ENCODE measurements at regions of chr20 and their contacts with region 1.

Region 1: DNA sequence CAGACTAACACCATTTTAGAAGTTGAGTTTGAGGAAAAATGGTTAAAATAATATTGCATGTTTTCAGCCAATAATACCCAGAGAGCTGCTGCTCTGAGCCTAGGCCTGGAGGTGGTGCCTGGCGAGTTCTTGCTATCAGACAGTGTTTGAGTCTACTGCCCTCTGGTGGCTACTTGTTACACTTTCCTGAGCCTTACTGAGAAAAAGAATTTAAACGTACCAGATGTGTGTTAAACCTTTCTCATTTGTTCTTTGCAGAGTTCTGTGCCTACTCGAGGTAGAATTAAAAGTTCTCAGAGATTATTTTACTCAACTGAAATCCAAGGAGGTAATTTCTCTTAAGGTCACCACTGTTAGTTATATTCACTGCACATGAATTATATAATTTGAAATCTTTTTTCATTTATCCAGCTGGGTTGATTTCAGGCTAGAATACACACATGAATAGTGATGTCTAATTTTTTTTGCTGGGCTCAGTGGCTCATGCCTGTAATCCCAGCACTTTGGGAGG is 38.2 kb downstream of the SHLD1 start:
- DNase-seq: peak; percentile 88
- H3K4me3 Mint-ChIP-seq: no peak overlapping the region
- H3K27ac Mint-ChIP-seq: no peak overlapping the region
- H3K4me1 Mint-ChIP-seq: peaks cover 14% of the 10 kb centered on the region
- H3K27me3 Mint-ChIP-seq: no peaks in the 10 kb centered on the region
- CTCF ChIP-seq: peak; percentile 90

Region 2: GRCh38 chr20:5529331-5530148 is 258.9 kb before region 1 on chr20:
- CTCF ChIA-PET with region 1: interaction called, 216 read pairs
- POLR2A ChIA-PET with region 1: interaction called, 29 read pairs
- intact Hi-C with region 1: loop called (anchors 1 kb)
- DNase-seq: peak; percentile 85
- H3K4me3 Mint-ChIP-seq: no peak overlapping the region
- H3K27ac Mint-ChIP-seq: peak overlapping the region; percentile 23
- H3K4me1 Mint-ChIP-seq: peaks cover 34% of the 10 kb centered on the region
- H3K27me3 Mint-ChIP-seq: peaks cover 12% of the 10 kb centered on the region
- CTCF ChIP-seq: peak; percentile 71

Region 3: GRCh38 chr20:5569021-5569420 is 219.4 kb before region 1 on chr20:
- CTCF ChIA-PET with region 1: interaction called, 87 read pairs
- POLR2A ChIA-PET with region 1: interaction called, 7 read pairs
- intact Hi-C with region 1: loop called (anchors 1 kb)
- DNase-seq: peak; percentile 67
- H3K4me3 Mint-ChIP-seq: no peak overlapping the region
- H3K27ac Mint-ChIP-seq: no peak overlapping the region
- H3K4me1 Mint-ChIP-seq: peaks cover 6% of the 10 kb centered on the region
- H3K27me3 Mint-ChIP-seq: no peaks in the 10 kb centered on the region
- CTCF ChIP-seq: peak; percentile 57

Region 4: GRCh38 chr20:5608442-5609161 is 179.8 kb before region 1 on chr20:
- CTCF ChIA-PET with region 1: interaction called, 7 read pairs
- POLR2A ChIA-PET with region 1: interaction called, 13 read pairs
- intact Hi-C with region 1: loop called (anchors 1 kb)
- DNase-seq: peak; percentile 61
- H3K4me3 Mint-ChIP-seq: peak overlapping the region; percentile 91
- H3K27ac Mint-ChIP-seq: peak overlapping the region; percentile 94
- H3K4me1 Mint-ChIP-seq: peaks cover 35% of the 10 kb centered on the region
- H3K27me3 Mint-ChIP-seq: no peaks in the 10 kb centered on the region
- CTCF ChIP-seq: no peak

Region 5: DNA sequence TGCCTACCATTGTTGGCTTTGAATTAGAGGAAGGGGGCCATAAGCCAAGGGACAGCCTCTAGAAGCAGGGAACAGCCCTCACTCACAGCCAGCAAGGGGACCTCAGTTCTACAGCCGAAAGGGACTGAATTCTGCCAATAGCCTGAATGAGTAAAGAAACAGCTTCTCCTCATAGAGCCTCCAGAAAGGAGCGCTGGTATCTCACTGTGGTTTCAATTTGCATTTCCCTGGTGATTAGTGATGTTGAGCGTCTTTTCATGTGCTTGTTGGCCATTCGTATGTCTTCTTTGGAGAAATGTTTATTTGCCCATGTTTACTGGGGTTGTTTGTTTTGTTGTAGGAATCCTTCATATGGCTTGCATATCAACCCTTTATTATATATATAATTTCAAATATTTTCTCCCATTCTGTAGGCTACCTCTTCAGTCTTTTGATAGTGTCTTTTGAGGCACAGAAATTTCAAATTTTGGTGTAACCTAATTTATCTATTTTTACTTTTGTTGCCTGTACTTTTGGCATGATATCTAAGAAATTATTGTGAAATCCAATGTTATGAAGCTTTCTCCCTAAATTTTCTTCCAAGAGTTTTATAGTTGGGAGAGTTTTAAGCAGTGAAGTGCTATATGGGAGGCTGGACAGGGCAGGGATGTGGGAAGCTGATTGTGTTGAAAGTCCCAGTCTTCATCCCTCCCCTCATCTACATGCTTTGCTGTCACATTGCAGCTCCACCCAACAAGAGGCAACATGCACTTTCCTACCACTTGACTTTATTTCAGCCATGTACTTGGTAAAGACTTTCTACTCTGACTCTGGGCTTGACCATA is 120.5 kb before region 1 on chr20:
- CTCF ChIA-PET with region 1: interaction called, 5 read pairs
- POLR2A ChIA-PET with region 1: interaction called, 14 read pairs
- intact Hi-C with region 1: no loop called
- DNase-seq: no peak
- H3K4me3 Mint-ChIP-seq: no peak overlapping the region
- H3K27ac Mint-ChIP-seq: peak overlapping the region; percentile 1
- H3K4me1 Mint-ChIP-seq: peaks cover 12% of the 10 kb centered on the region
- H3K27me3 Mint-ChIP-seq: no peaks in the 10 kb centered on the region
- CTCF ChIP-seq: no peak

Region 6: DNA sequence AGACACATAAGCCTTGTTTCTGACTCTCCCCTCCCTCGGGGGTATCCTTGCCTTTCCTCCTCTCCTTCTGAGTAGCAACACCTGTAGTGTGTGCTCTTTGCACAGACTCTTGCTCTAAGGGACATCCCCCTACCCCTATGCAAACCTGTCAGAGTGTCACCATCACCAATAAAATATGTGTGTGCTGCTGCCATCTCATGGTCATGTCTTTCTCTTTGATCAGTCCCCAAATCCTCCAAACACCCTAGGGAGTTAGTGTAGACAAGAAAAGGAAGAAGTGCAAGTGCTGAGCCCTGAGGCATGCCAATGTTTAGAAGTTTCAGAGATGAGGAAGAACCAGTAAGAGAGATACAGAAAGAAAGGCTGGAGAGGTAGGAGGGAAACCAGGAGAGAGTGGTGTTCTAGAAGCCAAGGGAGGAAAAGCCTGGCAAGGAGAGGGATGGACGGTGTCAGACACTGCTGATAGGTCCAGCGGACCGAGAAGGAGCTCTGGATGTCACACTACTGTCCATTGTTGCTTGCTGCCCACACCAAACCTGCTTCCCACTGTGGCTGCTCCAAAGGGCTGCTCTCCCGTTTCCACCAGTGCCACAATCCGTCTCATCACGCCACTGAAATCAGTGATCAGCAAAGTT is 145.5 kb after region 1 on chr20:
- CTCF ChIA-PET with region 1: interaction called, 6 read pairs
- POLR2A ChIA-PET with region 1: no interaction called
- intact Hi-C with region 1: loop called (anchors 1 kb)
- DNase-seq: peak; percentile 56
- H3K4me3 Mint-ChIP-seq: no peak overlapping the region
- H3K27ac Mint-ChIP-seq: no peak overlapping the region
- H3K4me1 Mint-ChIP-seq: peaks cover 5% of the 10 kb centered on the region
- H3K27me3 Mint-ChIP-seq: no peaks in the 10 kb centered on the region
- CTCF ChIP-seq: peak; percentile 42

Measured in MCF 10A (cell line).